Activated naive CD4-positive, alpha-beta T cell treated with anti-CD3 and anti-CD28 coated beads for 36 hours (primary cell): ENCODE measurements at regions of chr6 and their contacts with region 1.

Region 1: GRCh38 chr6:117976030-117976651 is 69.1 kb downstream of the SLC35F1 start:
- DNase-seq: peak; percentile 17
- H3K4me3 Mint-ChIP-seq: no peak overlapping the region
- H3K27ac Mint-ChIP-seq: no peak overlapping the region
- H3K4me1 Mint-ChIP-seq: no peaks in the 10 kb centered on the region
- H3K27me3 Mint-ChIP-seq: peaks cover 8% of the 10 kb centered on the region

Region 2: DNA sequence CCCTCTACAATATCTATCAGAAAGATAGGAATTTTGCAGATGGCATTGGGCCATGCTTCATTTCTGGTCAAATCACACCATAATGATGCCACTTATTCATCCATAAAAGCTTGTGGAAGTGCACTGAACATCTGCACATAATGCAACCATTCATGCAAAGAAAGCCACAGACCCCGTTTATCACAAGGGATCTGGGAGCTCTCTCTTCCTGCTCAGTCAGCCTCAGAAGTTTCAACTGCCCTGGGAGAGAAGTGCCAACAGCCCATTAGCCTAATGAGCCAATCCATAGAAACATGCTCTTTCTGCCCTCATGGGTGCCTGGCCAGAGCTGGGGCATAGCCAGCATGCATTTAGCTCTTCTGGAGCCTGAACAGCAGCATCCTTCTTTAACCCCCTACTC is 16.7 kb after region 1 on chr6:
- CTCF ChIA-PET with region 1: interaction called, 17 read pairs
- intact Hi-C with region 1: no loop called
- DNase-seq: no peak
- H3K4me3 Mint-ChIP-seq: no peak overlapping the region
- H3K27ac Mint-ChIP-seq: no peak overlapping the region
- H3K4me1 Mint-ChIP-seq: no peaks in the 10 kb centered on the region
- H3K27me3 Mint-ChIP-seq: peaks cover 7% of the 10 kb centered on the region

Region 3: GRCh38 chr6:118263921-118264486 is 287.9 kb after region 1 on chr6:
- CTCF ChIA-PET with region 1: interaction called, 11 read pairs
- intact Hi-C with region 1: loop called (anchors 1 kb)
- DNase-seq: peak; percentile 19
- H3K4me3 Mint-ChIP-seq: no peak overlapping the region
- H3K27ac Mint-ChIP-seq: no peak overlapping the region
- H3K4me1 Mint-ChIP-seq: no peaks in the 10 kb centered on the region
- H3K27me3 Mint-ChIP-seq: no peaks in the 10 kb centered on the region